GM12878 (cell line): ENCODE measurements at regions of chr6 and their contacts with region 1.

Region 1: DNA sequence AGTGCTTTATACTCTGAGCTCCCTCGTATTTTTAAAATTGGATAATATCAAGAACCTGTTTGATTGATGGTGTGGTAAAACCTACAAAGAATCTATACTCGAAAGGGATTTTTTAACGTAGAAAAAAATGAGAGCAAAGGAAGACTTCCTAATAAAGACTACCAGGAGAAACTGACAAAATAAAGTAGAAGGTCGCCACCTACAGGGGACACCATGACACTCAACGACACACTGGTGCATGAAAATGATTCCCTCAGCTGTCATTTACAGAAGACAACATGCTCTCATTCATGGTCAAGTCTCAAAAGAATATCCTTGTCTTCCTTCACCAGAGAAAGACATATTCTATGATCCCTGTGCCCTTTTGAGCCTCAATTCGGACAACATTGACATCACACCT is 10.1 kb upstream of the NHSL1 start:
- DNase-seq: no peak
- ATAC-seq: peak; percentile 89
- H3K4me3 ChIP-seq: no peak overlapping the region
- H3K27ac ChIP-seq: no peak overlapping the region
- H3K4me1 ChIP-seq: no peaks in the 10 kb centered on the region
- H3K27me3 ChIP-seq: no peaks in the 10 kb centered on the region
- CTCF ChIP-seq: peak; percentile 45 to 83 (median 55); a peak in 4 of 6 replicates
- EP300 ChIP-seq: no peak
- POLR2A ChIP-seq: no peak
- RAD21 ChIP-seq: peak; percentile 69

Region 2: GRCh38 chr6:138403801-138404661 is 105.3 kb before region 1 on chr6 and contains the start of gene HEBP2:
- CTCF ChIA-PET with region 1: interaction called, 32 read pairs
- POLR2A ChIA-PET with region 1: no interaction called
- RAD21 ChIA-PET with region 1: interaction called, 26 read pairs
- SMC1A ChIA-PET with region 1: interaction called, 34 read pairs
- in situ Hi-C with region 1: no loop called
- intact Hi-C with region 1: no loop called
- DNase-seq: peak; percentile 65
- ATAC-seq: peak; percentile 91
- H3K4me3 ChIP-seq: peak within 1 kb of the TSS; percentile 87
- H3K27ac ChIP-seq: peak within 1 kb of the TSS; percentile 61
- H3K4me1 ChIP-seq: peaks cover 3% of the 10 kb centered on the region; the same call in 1 of the 2 replicates
- H3K27me3 ChIP-seq: no peaks in the 10 kb centered on the region
- CTCF ChIP-seq: peak; percentile 39 to 44 (median 40); a peak in 5 of 6 replicates
- EP300 ChIP-seq: no peak
- POLR2A ChIP-seq: peak; percentile 78
- RAD21 ChIP-seq: peak; percentile 34; the same call in 1 of the 2 replicates
- polyA plus RNA-seq, gene HEBP2: 3.8 to 17.2 TPM

Region 3: DNA sequence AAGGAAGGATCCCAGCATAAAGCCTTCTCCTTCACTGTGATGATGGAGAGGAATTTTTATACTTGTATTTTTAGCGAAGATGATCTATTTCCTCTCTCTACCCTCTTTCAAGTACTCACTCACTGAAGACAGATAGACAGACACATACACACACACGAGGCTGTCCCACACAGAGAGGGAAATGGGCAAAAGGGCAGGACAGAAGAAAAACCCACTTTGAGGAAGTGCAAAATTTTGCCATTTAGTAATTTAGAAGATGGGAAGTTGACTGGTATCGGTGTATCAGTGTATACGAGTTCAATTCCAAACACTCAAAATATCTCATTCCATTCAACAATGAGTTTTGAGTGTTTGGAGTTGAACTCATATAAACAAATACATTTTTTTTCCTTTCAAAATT is 74.4 kb before region 1 on chr6:
- CTCF ChIA-PET with region 1: interaction called, 387 read pairs
- POLR2A ChIA-PET with region 1: interaction called, 6 read pairs
- RAD21 ChIA-PET with region 1: interaction called, 202 read pairs
- SMC1A ChIA-PET with region 1: interaction called, 234 read pairs
- in situ Hi-C with region 1: loop called (anchors 5 kb)
- intact Hi-C with region 1: no loop called
- DNase-seq: no peak
- ATAC-seq: no peak
- H3K4me3 ChIP-seq: no peak overlapping the region
- H3K27ac ChIP-seq: no peak overlapping the region
- H3K4me1 ChIP-seq: no peaks in the 10 kb centered on the region
- H3K27me3 ChIP-seq: no peaks in the 10 kb centered on the region
- CTCF ChIP-seq: no peak
- EP300 ChIP-seq: no peak
- POLR2A ChIP-seq: no peak
- RAD21 ChIP-seq: no peak

Region 4: DNA sequence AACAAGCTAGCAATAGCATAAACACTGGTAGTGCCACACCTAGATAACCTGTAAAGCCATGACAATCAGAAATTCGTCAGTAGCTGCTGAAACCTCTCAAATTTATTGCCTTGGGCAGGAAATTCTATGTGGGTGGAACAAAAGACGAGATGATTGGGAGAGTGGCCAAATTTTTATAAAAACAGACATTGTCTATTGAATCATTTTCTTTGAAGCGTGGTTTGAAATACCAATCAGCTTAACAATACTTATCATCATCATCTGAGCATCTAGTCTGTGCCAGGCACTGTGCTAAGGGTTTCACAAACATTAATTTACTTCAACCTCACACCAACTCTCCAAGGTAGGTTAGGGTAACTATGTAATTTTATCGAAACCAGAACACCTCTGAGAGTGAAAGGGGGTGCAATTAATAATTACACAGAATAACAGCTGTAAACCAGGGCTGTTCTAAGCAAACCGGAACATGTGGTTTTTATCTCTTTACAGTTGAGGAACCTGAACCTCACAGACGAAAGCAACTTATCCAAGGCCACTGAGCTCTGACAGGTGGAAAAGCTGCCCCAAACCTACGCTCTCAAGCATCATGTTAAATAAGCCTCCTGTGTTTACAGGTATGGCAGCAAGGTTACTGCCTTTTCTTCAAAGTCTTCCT is 53.5 kb before region 1 on chr6:
- CTCF ChIA-PET with region 1: interaction called, 99 read pairs
- POLR2A ChIA-PET with region 1: interaction called, 3 read pairs
- RAD21 ChIA-PET with region 1: interaction called, 29 read pairs
- SMC1A ChIA-PET with region 1: interaction called, 59 read pairs
- in situ Hi-C with region 1: no loop called
- intact Hi-C with region 1: no loop called
- DNase-seq: peak; percentile 77
- ATAC-seq: peak; percentile 92
- H3K4me3 ChIP-seq: no peak overlapping the region
- H3K27ac ChIP-seq: no peak overlapping the region
- H3K4me1 ChIP-seq: peaks cover 21% of the 10 kb centered on the region
- H3K27me3 ChIP-seq: no peaks in the 10 kb centered on the region
- CTCF ChIP-seq: no peak
- EP300 ChIP-seq: peak; percentile 75 to 83
- POLR2A ChIP-seq: no peak
- RAD21 ChIP-seq: no peak

Region 5: GRCh38 chr6:138526822-138527235 is 17.5 kb after region 1 on chr6:
- CTCF ChIA-PET with region 1: interaction called, 26 read pairs
- POLR2A ChIA-PET with region 1: interaction called, 4 read pairs
- RAD21 ChIA-PET with region 1: interaction called, 6 read pairs
- SMC1A ChIA-PET with region 1: interaction called, 11 read pairs
- in situ Hi-C with region 1: no loop called
- intact Hi-C with region 1: no loop called
- DNase-seq: no peak
- ATAC-seq: no peak
- H3K4me3 ChIP-seq: no peak overlapping the region
- H3K27ac ChIP-seq: no peak overlapping the region
- H3K4me1 ChIP-seq: no peaks in the 10 kb centered on the region
- H3K27me3 ChIP-seq: no peaks in the 10 kb centered on the region
- CTCF ChIP-seq: no peak
- EP300 ChIP-seq: no peak
- POLR2A ChIP-seq: no peak
- RAD21 ChIP-seq: no peak

Region 6: DNA sequence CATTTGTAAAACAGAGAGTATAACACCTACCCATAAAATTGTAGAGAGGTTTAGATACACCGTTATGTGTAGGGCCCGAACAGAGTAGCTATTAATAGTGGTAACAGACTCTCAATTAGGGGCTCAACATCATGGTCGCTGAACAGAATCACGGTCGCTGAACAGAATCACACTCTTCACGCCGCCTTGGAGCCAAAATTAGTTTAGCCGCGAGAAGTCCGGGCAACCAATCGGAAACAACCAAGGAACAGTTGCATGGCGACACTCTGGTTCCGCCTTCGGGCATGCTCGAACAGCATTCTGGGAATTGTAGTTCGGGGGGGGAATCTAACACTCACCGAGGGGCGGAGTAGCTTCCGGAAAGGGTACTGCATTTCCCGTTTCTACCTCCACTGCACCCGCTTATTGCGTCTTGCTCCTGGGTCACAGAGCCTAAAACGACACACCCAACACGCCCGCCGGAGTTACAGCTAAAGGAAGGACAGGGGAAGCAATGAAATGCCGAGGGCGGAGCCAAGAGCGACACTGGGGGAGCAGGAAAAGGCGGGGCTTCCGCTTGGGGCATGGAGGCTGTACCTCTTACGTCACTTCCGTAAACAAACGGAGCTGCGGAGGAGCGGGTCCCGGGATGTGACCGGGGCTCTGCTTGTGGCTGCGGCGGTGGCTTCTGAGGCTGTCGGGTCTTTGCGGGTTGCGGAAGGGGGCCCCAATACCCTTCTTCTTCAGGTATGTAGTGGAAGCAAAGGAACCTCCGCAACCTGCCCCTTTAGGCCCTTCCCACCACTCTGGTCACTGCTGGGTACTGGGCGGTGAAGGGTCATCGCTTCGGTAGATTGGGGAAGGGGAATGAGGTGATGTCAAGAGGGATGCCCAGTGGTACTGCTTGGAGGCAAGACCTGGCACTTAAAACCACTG is 264.1 kb after region 1 on chr6 and contains the start of gene CCDC28A:
- CTCF ChIA-PET with region 1: interaction called, 12 read pairs
- POLR2A ChIA-PET with region 1: interaction called, 4 read pairs
- RAD21 ChIA-PET with region 1: interaction called, 3 read pairs
- SMC1A ChIA-PET with region 1: interaction called, 7 read pairs
- in situ Hi-C with region 1: no loop called
- intact Hi-C with region 1: loop called (anchors 10 kb)
- DNase-seq: peak; percentile 93
- ATAC-seq: peak; percentile 94
- H3K4me3 ChIP-seq: peak within 1 kb of the TSS; percentile 89
- H3K27ac ChIP-seq: peak within 1 kb of the TSS; percentile 97
- H3K4me1 ChIP-seq: peaks cover 12% of the 10 kb centered on the region
- H3K27me3 ChIP-seq: no peaks in the 10 kb centered on the region
- CTCF ChIP-seq: no peak
- EP300 ChIP-seq: no peak; a peak in 1 of 4 replicates
- POLR2A ChIP-seq: peak; percentile 79
- RAD21 ChIP-seq: no peak
- polyA plus RNA-seq, gene CCDC28A: 19.6 to 20.5 TPM